K562 (cell line): ENCODE measurements at regions of chr12 and their contacts with region 1.

Region 1: DNA sequence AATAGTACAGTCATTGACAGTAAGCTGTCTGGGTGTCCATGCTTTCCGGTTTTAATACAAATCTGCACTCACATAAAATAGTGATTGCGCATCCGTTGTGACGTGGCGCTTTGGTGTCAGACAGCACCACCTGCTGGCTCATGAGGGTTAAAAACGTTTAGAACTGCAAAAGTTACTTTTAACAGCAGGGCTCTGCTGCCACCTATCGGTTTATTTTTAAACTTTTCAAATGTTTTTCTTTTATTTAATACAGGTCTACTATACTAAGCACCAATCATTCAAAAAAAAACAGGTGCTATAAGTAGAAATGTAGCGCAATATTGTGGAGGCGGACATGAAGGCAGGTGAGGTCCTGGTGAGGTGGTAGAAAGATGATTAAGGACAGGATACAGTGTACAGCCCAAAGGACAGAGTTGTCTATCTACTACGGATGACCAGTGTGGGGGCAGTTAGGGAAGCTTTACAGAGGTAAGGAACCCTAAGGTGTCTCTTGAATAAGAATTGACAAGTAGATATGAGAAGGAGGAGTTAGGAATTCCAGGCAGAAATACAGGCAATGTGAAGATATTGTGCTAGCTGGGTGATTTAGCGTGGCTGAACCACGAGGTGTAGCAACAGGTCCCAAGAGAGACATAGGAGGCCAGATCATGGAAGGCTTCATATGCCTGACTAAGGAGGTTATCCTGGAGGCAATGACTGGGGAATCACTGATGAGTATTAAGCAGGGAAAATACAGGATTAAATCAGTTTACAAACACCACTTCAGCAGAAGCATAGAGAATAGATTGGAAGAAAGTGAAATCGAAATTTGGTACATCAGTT is 91.5 kb upstream of the PRB2 start:
- DNase-seq: peak; percentile 64 to 83 (median 70)
- ATAC-seq: peak; percentile 66
- H3K4me3 ChIP-seq: no peak overlapping the region
- H3K27ac ChIP-seq: no peak overlapping the region
- H3K4me1 ChIP-seq: no peaks in the 10 kb centered on the region
- H3K27me3 ChIP-seq: no peaks in the 10 kb centered on the region
- CTCF ChIP-seq: peak; percentile 84 to 99 (median 99)
- EP300 ChIP-seq: no peak
- POLR2A ChIP-seq: no peak
- RAD21 ChIP-seq: peak; percentile 79 to 87

Region 2: GRCh38 chr12:10771132-10771733 is 715.6 kb before region 1 on chr12:
- CTCF ChIA-PET with region 1: interaction called, 41 read pairs
- POLR2A ChIA-PET with region 1: no interaction called
- in situ Hi-C with region 1: loop called (anchors 5 kb)
- intact Hi-C with region 1: loop called (anchors 1 kb)
- DNase-seq: peak; percentile 5 to 17 (median 7)
- ATAC-seq: no peak
- H3K4me3 ChIP-seq: no peak overlapping the region
- H3K27ac ChIP-seq: no peak overlapping the region
- H3K4me1 ChIP-seq: no peaks in the 10 kb centered on the region
- H3K27me3 ChIP-seq: peaks cover 0 to 4% of the 10 kb centered on the region in 2 experiments; a peak in 1 of 5 replicates
- CTCF ChIP-seq: peak in 2 of 3 experiments; percentile 40 to 67; a peak in 3 of 6 replicates
- EP300 ChIP-seq: no peak
- POLR2A ChIP-seq: no peak
- RAD21 ChIP-seq: peak; percentile 55 to 78

Region 3: DNA sequence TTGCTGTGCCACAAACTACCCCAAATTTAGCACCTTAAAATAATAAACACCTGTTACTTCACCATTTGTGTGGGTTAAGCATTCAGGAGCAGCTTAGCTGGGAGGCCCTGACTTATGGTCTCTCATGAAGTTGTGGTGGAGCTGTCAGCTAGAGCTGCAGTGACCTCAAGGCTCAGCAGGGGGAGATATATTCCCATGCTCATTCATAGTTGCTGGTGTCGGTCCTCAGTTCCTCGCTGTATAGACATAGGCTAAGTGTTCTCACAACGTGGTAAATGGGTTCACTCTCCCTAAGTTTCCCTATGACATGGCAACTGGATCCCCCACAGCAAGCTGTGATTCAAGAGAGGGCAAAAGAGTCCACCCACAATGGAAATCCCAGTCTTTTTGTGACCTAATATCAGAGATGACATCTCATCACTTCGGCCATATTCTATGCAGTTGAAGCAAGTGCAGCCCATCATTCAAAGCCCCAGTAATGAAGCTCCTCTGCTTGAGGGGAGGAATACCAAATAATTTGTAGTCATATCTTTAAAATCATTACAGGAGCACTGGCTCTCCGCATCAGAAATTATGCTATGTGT is 258.4 kb before region 1 on chr12:
- CTCF ChIA-PET with region 1: interaction called, 26 read pairs
- POLR2A ChIA-PET with region 1: no interaction called
- in situ Hi-C with region 1: loop called (anchors 5 kb)
- intact Hi-C with region 1: loop called (anchors 1 kb)
- DNase-seq: peak; percentile 22 to 50 (median 29)
- ATAC-seq: peak; percentile 85
- H3K4me3 ChIP-seq: no peak overlapping the region
- H3K27ac ChIP-seq: no peak overlapping the region
- H3K4me1 ChIP-seq: no peaks in the 10 kb centered on the region
- H3K27me3 ChIP-seq: no peaks in the 10 kb centered on the region
- CTCF ChIP-seq: peak; percentile 57 to 73 (median 69)
- EP300 ChIP-seq: no peak
- POLR2A ChIP-seq: no peak
- RAD21 ChIP-seq: peak in 1 of 2 experiments; percentile 67; a peak in 3 of 4 replicates

Region 4: DNA sequence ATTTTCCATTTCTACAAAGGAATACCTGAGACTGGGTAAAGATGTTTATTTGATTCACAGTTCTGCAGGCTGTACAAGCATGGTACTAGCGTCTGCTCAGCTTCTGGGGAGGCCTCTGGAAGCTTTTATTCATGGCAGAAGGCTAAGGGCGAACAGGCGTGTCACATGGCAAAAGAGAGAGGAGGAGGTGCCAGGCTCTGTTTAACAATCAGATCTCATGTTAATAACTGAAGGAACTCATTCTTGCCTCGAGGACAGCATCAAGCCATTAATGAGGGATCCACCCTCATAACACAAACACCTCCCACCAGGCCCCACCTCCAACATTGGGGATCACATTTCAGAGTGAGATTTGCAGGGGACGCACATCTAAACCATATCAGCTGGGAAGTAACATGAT is 253.3 kb before region 1 on chr12:
- CTCF ChIA-PET with region 1: interaction called, 26 read pairs
- POLR2A ChIA-PET with region 1: no interaction called
- in situ Hi-C with region 1: loop called (anchors 5 kb)
- intact Hi-C with region 1: loop called (anchors 1 kb)
- DNase-seq: no peak
- ATAC-seq: no peak
- H3K4me3 ChIP-seq: no peak overlapping the region
- H3K27ac ChIP-seq: no peak overlapping the region
- H3K4me1 ChIP-seq: no peaks in the 10 kb centered on the region
- H3K27me3 ChIP-seq: 0 out of 5 replicates have a peak, but pooled peaks cover 0 to 3% of the 10 kb centered on the region in 2 experiments
- CTCF ChIP-seq: no peak
- EP300 ChIP-seq: no peak
- POLR2A ChIP-seq: no peak
- RAD21 ChIP-seq: no peak

Region 5: DNA sequence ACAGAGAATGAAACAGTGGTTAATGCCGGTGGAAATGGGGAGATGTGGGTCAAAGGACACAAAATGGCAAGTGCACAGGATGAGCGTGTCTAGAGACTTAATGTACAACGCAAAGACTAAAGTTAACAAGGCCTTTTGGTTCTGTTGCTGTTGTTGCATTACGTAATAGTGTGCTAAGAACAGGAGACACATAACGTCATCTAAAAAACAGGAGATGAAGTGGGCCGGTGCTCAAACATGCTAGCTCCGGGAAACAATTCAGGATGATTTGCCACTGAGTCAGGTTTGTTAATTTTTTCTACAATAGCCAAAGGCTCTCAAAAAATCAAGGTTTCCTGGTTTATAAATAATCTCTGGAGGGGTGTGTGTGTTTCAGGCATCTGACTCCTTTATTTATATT is 218.2 kb after region 1 on chr12:
- CTCF ChIA-PET with region 1: no interaction called
- POLR2A ChIA-PET with region 1: no interaction called
- in situ Hi-C with region 1: no loop called
- intact Hi-C with region 1: no loop called
- DNase-seq: no peak
- ATAC-seq: no peak
- H3K4me3 ChIP-seq: no peak overlapping the region
- H3K27ac ChIP-seq: no peak overlapping the region
- H3K4me1 ChIP-seq: peaks cover 0 to 11% of the 10 kb centered on the region in 2 experiments; a peak in 3 of 5 replicates
- H3K27me3 ChIP-seq: no peaks in the 10 kb centered on the region
- CTCF ChIP-seq: no peak
- EP300 ChIP-seq: no peak
- POLR2A ChIP-seq: no peak
- RAD21 ChIP-seq: no peak